ENCODE measurements at regions of chr6 and their contacts with region 1.

Region 1: GRCh38 chr6:96907498-96907897 is 9.8 kb upstream of the NDUFAF4 start:
- DNase-seq: peak; percentile 63
- H3K4me3 Mint-ChIP-seq: no peak overlapping the region
- H3K27ac Mint-ChIP-seq: no peak overlapping the region
- H3K4me1 Mint-ChIP-seq: peaks cover 16% of the 10 kb centered on the region
- H3K27me3 Mint-ChIP-seq: peaks cover 25% of the 10 kb centered on the region

Region 2: DNA sequence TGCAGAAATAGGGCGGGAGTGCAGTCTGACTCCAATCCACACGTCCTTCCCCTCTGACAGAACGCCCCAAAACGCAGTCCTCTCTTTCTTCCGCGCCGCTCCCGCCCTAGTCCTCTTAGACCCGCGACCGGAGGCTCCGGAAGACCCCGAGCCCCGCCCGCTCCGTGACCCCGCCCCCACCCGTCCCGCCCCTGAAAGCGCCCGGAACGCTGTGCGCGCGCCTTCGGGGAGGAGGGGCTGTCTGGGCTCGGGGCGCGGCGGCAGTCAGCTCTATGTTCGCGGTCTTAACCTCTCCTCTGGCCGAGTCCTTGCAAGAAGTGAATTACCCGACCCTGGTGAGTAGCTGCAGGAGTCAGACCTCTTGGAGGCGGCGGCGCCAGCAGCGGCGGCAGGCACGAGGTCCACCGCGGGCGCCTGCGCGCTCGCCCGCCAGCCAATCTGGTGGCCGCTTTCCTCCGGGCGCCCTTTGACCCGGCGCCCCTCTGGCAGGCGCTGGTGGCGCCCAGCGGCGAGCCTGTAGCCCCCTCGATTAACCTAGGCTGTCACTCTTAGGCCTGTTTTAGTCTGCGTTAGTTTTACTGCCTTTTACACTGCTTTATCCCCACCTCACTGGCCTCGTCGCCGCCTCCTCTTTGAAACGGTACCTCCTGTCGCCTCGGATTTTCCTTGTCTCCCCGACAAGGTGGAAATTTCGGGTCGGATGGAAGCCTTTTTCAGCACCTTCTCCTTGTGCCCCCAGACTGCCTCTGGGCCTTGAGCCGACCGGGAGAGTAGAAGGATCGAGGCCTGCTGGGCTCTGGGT is 1330.0 kb before region 1 on chr6 and contains the start of gene MANEA:
- intact Hi-C with region 1: loop called (anchors 5 kb)
- DNase-seq: peak; percentile 94
- H3K4me3 Mint-ChIP-seq: peak within 1 kb of the TSS; percentile 98
- H3K27ac Mint-ChIP-seq: peak within 1 kb of the TSS; percentile 98
- H3K4me1 Mint-ChIP-seq: peaks cover 42% of the 10 kb centered on the region
- H3K27me3 Mint-ChIP-seq: no peaks in the 10 kb centered on the region
- total RNA-seq, gene MANEA: 22.6 and 23.1 TPM in 2 replicates

Region 3: GRCh38 chr6:96213784-96214183 is 693.7 kb before region 1 on chr6:
- intact Hi-C with region 1: no loop called
- DNase-seq: no peak
- H3K4me3 Mint-ChIP-seq: no peak overlapping the region
- H3K27ac Mint-ChIP-seq: no peak overlapping the region
- H3K4me1 Mint-ChIP-seq: no peaks in the 10 kb centered on the region
- H3K27me3 Mint-ChIP-seq: no peaks in the 10 kb centered on the region

Region 4: GRCh38 chr6:96923871-96924493 is 16.5 kb after region 1 on chr6:
- intact Hi-C with region 1: loop called (anchors 1 kb)
- DNase-seq: no peak
- H3K4me3 Mint-ChIP-seq: peak overlapping the region; percentile 91
- H3K27ac Mint-ChIP-seq: peak overlapping the region; percentile 91
- H3K4me1 Mint-ChIP-seq: peaks cover 31% of the 10 kb centered on the region
- H3K27me3 Mint-ChIP-seq: peaks cover 3% of the 10 kb centered on the region

Region 5: GRCh38 chr6:97049253-97050011 is 141.9 kb after region 1 on chr6:
- intact Hi-C with region 1: loop called (anchors 1 kb)
- DNase-seq: peak; percentile 55
- H3K4me3 Mint-ChIP-seq: peak overlapping the region; percentile 15
- H3K27ac Mint-ChIP-seq: peak overlapping the region; percentile 63
- H3K4me1 Mint-ChIP-seq: peaks cover 10% of the 10 kb centered on the region
- H3K27me3 Mint-ChIP-seq: no peaks in the 10 kb centered on the region

Region 6: GRCh38 chr6:97059473-97059872 is 152.0 kb after region 1 on chr6:
- intact Hi-C with region 1: no loop called
- DNase-seq: peak; percentile 54
- H3K4me3 Mint-ChIP-seq: no peak overlapping the region
- H3K27ac Mint-ChIP-seq: no peak overlapping the region
- H3K4me1 Mint-ChIP-seq: no peaks in the 10 kb centered on the region
- H3K27me3 Mint-ChIP-seq: peaks cover 2% of the 10 kb centered on the region

Measured in activated CD4-positive, alpha-beta T cell treated with anti-CD3 and anti-CD28 coated beads, Interleukin-2, amount 10 ng/mL, durations not matched to agents 24 days and 14 days (primary cell).